CD4-positive, alpha-beta T cell (primary cell): ENCODE measurements at regions of chr15 and their contacts with region 1.

Region 1: DNA sequence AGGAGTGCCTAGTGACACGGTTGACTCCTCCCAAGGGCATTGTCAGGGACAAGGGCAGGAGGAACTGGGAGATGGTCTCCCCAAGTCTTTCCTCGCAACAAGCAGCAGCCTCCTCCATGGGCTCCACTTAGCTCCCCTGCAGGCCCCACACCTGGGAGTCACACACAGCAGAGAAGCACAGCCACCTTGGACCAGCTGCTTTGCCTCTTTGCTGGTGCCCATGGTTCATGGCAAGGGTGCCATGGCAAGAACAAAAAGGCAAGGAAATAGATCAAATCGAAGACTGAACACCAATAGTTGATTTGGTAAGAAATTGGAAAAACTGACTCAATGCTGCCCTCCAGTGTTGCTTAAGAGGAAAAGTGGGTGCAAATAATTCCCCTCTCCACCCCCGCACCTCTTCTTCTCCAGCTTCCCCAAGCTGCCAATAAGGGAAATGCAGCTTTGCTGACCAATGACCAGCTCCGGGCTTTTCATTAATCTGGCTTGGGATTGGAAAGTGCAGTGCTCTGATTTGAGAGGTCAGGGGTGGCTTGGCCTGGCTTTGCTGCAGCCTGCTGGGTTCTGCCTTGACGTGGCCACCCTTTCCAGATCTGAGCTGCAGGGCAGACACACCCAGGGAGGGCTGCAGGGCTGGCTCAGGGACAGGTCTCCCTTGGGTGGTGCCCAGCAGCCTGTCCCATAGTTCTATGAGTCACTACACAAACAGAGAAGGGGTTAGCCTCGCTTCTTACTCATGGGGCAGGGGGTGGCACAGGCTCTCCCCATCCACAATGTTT is 162.0 kb downstream of the KLF13 start:
- DNase-seq: peak in 9 of 14 experiments; percentile 16 to 89 (median 33)
- ATAC-seq: peak; percentile 64
- H3K4me3 ChIP-seq: no peak overlapping the region
- H3K4me3 Mint-ChIP-seq: peak overlapping the region; percentile 58
- H3K27ac ChIP-seq: no peak overlapping the region
- H3K27ac Mint-ChIP-seq: no peak overlapping the region
- H3K4me1 ChIP-seq: peaks cover 37% of the 10 kb centered on the region
- H3K4me1 Mint-ChIP-seq: peaks cover 29% of the 10 kb centered on the region
- H3K27me3 ChIP-seq: no peaks in the 10 kb centered on the region
- H3K27me3 Mint-ChIP-seq: no peaks in the 10 kb centered on the region
- CTCF ChIP-seq: peak; percentile 81

Region 2: GRCh38 chr15:30991255-30992072 is 497.2 kb before region 1 on chr15 and contains the start of gene MTMR10:
- CTCF ChIA-PET with region 1: no interaction called
- POLR2A ChIA-PET with region 1: no interaction called
- intact Hi-C with region 1: loop called in 1 of 2 experiments (anchors 5 kb)
- DNase-seq: peak; percentile 45 to 88 (median 66)
- ATAC-seq: peak; percentile 95
- H3K4me3 ChIP-seq: peak within 1 kb of the TSS; percentile 97
- H3K4me3 Mint-ChIP-seq: peak within 1 kb of the TSS; percentile 97
- H3K27ac ChIP-seq: peak within 1 kb of the TSS; percentile 63
- H3K27ac Mint-ChIP-seq: peak within 1 kb of the TSS; percentile 94
- H3K4me1 ChIP-seq: peaks cover 21% of the 10 kb centered on the region
- H3K4me1 Mint-ChIP-seq: peaks cover 34% of the 10 kb centered on the region
- H3K27me3 ChIP-seq: no peaks in the 10 kb centered on the region
- H3K27me3 Mint-ChIP-seq: no peaks in the 10 kb centered on the region
- CTCF ChIP-seq: no peak
- total RNA-seq, gene MTMR10: 41.2 to 42.0 TPM

Region 3: DNA sequence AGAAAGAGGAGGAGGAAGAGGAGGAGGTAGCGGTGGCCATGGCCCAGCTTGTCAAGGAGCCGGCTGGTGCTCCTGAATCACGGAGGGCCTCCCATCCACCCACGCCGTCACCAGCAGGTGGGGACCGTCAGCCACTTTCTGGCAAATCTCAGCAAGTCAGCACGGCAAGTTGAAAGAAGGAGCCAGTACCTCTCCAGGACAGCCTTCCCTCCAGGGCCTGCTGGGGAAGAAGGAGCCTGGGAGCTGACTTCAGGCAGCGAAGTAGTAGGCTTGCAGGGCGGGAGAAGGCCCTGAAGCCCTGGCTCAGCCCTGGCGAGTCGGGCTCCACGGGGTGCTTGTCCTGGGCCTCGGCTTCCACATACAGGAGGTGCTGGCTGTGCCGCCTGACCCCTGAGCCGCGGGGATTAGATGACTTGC is 287.9 kb before region 1 on chr15:
- CTCF ChIA-PET with region 1: interaction called, 5 read pairs
- POLR2A ChIA-PET with region 1: interaction called, 7 read pairs
- intact Hi-C with region 1: loop called (anchors 1 to 2 kb)
- DNase-seq: peak; percentile 65 to 85 (median 73)
- ATAC-seq: peak; percentile 84
- H3K4me3 ChIP-seq: no peak overlapping the region
- H3K4me3 Mint-ChIP-seq: no peak overlapping the region
- H3K27ac ChIP-seq: no peak overlapping the region
- H3K27ac Mint-ChIP-seq: no peak overlapping the region
- H3K4me1 ChIP-seq: peaks cover 41% of the 10 kb centered on the region
- H3K4me1 Mint-ChIP-seq: peaks cover 22% of the 10 kb centered on the region
- H3K27me3 ChIP-seq: no peaks in the 10 kb centered on the region
- H3K27me3 Mint-ChIP-seq: no peaks in the 10 kb centered on the region
- CTCF ChIP-seq: peak; percentile 57

Region 4: GRCh38 chr15:31302778-31303725 is 185.6 kb before region 1 on chr15:
- CTCF ChIA-PET with region 1: interaction called, 4 read pairs
- POLR2A ChIA-PET with region 1: interaction called, 3 read pairs
- intact Hi-C with region 1: loop called in 1 of 2 experiments (anchors 1 kb)
- DNase-seq: peak in 4 of 14 experiments; percentile 16 to 54 (median 39)
- ATAC-seq: peak; percentile 49
- H3K4me3 ChIP-seq: no peak overlapping the region
- H3K4me3 Mint-ChIP-seq: no peak overlapping the region
- H3K27ac ChIP-seq: no peak overlapping the region
- H3K27ac Mint-ChIP-seq: peak overlapping the region; percentile 58
- H3K4me1 ChIP-seq: peaks cover 43% of the 10 kb centered on the region
- H3K4me1 Mint-ChIP-seq: peaks cover 46% of the 10 kb centered on the region
- H3K27me3 ChIP-seq: no peaks in the 10 kb centered on the region
- H3K27me3 Mint-ChIP-seq: peaks cover 5% of the 10 kb centered on the region
- CTCF ChIP-seq: no peak

Region 5: GRCh38 chr15:31391687-31392671 is 96.6 kb before region 1 on chr15:
- CTCF ChIA-PET with region 1: interaction called, 4 read pairs
- POLR2A ChIA-PET with region 1: interaction called, 11 read pairs
- intact Hi-C with region 1: loop called (anchors 2 to 10 kb)
- DNase-seq: peak; percentile 65 to 93 (median 82)
- ATAC-seq: peak; percentile 87
- H3K4me3 ChIP-seq: peak overlapping the region; percentile 75
- H3K4me3 Mint-ChIP-seq: peak overlapping the region; percentile 95
- H3K27ac ChIP-seq: peak overlapping the region; percentile 8 to 37
- H3K27ac Mint-ChIP-seq: peak overlapping the region; percentile 86
- H3K4me1 ChIP-seq: peaks cover 51% of the 10 kb centered on the region
- H3K4me1 Mint-ChIP-seq: peaks cover 52% of the 10 kb centered on the region
- H3K27me3 ChIP-seq: no peaks in the 10 kb centered on the region
- H3K27me3 Mint-ChIP-seq: no peaks in the 10 kb centered on the region
- CTCF ChIP-seq: no peak

Region 6: DNA sequence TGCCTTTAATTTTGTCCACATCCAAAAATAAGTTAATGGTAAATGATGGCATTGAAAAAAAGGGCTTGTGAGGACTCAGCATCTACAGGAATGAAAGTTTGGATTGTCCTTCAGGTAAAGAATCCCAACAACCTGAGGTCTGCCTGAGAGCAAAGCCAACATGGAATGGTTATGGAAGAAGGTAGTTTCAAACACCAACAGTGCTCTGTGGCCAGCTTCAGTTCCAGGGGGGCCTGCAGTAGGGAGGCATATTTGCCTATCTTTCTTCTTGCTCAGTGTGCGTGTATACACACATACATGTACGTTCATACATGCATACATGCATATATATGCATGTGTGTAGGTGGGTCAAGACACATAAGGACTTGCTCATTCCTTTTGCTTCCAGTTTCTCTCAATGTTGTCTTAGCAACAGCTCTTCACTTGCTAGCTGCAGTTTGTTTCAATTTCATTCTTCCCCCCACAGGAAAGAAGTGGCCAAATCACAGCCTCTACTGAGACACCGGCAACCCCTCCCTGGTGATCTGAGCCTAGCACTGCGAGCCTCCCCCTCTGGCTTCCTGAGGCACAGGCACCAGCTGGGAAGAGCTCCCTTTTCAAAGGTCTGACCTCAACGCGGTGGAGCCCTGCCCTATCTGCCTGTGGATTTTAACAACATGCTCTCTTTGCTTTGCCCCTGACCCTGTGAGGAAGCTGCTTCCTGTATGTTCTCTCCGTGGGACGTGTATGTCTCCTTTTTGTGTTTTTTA is 15.8 kb before region 1 on chr15:
- CTCF ChIA-PET with region 1: interaction called, 7 read pairs
- POLR2A ChIA-PET with region 1: interaction called, 62 read pairs
- intact Hi-C with region 1: no loop called
- DNase-seq: peak in 13 of 14 experiments; percentile 28 to 86 (median 43)
- ATAC-seq: peak; percentile 91
- H3K4me3 ChIP-seq: peak overlapping the region; percentile 46
- H3K4me3 Mint-ChIP-seq: peak overlapping the region; percentile 67
- H3K27ac ChIP-seq: peak overlapping the region; percentile 55 to 69
- H3K27ac Mint-ChIP-seq: peak overlapping the region; percentile 83
- H3K4me1 ChIP-seq: peaks cover 57% of the 10 kb centered on the region
- H3K4me1 Mint-ChIP-seq: peaks cover 45% of the 10 kb centered on the region
- H3K27me3 ChIP-seq: no peaks in the 10 kb centered on the region
- H3K27me3 Mint-ChIP-seq: no peaks in the 10 kb centered on the region
- CTCF ChIP-seq: no peak

Region 7: GRCh38 chr15:31571671-31572070 is 83.1 kb after region 1 on chr15:
- CTCF ChIA-PET with region 1: no interaction called
- POLR2A ChIA-PET with region 1: no interaction called
- intact Hi-C with region 1: no loop called
- DNase-seq: no peak
- ATAC-seq: no peak
- H3K4me3 ChIP-seq: no peak overlapping the region
- H3K4me3 Mint-ChIP-seq: no peak overlapping the region
- H3K27ac ChIP-seq: no peak overlapping the region
- H3K27ac Mint-ChIP-seq: no peak overlapping the region
- H3K4me1 ChIP-seq: no peaks in the 10 kb centered on the region
- H3K4me1 Mint-ChIP-seq: no peaks in the 10 kb centered on the region
- H3K27me3 ChIP-seq: no peaks in the 10 kb centered on the region
- H3K27me3 Mint-ChIP-seq: peaks cover 18% of the 10 kb centered on the region
- CTCF ChIP-seq: no peak